Right lobe of liver (tissue), 6 donors: ENCODE measurements at regions of chr15 and their contacts with region 1.

Region 1: DNA sequence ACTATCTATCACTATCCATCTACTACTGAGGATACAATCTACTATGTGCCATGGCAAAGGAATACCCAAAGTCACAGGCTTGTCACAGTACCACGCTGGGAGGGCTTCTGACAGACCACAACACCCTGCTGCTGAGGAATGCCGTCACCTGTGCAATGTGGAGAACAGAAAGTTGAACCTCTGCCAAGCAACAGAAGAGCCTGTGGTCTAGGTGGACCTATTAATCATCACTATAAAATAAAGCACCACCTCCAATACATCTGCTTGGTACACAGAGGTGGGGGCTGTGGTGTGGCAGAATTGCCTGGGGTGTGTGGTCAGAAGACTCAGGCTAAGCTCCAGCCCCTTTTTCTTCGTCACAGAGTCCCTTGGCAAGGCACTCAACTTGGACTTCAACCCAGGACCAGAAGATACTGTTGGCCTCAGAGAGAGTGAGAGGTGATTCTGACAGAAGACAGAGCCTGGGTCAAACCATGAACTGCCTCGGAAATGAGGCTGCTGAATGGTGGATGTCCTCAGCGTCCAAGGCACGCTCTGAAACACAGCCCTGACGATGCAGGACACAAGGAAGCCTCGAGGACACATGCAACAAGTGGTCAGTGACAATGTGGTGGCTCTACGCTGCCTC is 189.4 kb upstream of the CHRNA7 start:
- DNase-seq: no peak
- ATAC-seq: no peak
- H3K4me3 ChIP-seq: no peak overlapping the region
- H3K27ac ChIP-seq: no peak overlapping the region
- H3K4me1 ChIP-seq: no peaks in the 10 kb centered on the region
- H3K27me3 ChIP-seq: no peaks in the 10 kb centered on the region
- CTCF ChIP-seq: no peak
- POLR2A ChIP-seq: no peak

Region 2: GRCh38 chr15:31782016-31782770 is 58.8 kb before region 1 on chr15:
- intact Hi-C with region 1: loop called in 1 of 2 experiments (anchors 10 kb)
- DNase-seq: no peak
- ATAC-seq: no peak
- H3K4me3 ChIP-seq: no peak overlapping the region
- H3K27ac ChIP-seq: no peak overlapping the region
- H3K4me1 ChIP-seq: no peaks in the 10 kb centered on the region
- H3K27me3 ChIP-seq: no peaks in the 10 kb centered on the region
- CTCF ChIP-seq: no peak
- POLR2A ChIP-seq: no peak